PC-3 (cell line): ENCODE measurements at regions of chr20 and their contacts with region 1.

Region 1: DNA sequence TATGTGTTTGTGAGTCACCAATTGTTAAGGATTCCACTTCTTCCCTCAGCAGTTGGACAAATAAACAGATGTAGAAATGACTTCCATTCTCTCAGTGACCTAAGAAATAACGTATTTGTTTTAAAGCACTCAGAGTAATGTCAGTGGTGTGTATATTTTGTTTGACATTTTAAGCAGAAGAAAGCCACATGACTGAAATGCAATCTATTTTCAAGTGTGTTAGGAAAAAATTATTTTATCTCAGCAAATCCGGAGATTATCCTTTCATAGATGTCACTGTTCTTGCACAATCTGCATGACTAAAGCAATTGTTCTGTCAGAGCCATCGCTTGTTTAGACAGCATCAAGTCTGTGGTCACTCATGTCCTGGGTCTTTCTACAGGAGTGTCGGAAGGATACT is 77.1 kb downstream of the JAG1 start:
- DNase-seq: peak; percentile 87
- ATAC-seq: 0 out of 2 replicates have a peak, but pooled peaks have one; percentile 9
- H3K4me3 ChIP-seq: no peak overlapping the region
- H3K27ac ChIP-seq: peak overlapping the region; percentile 95
- H3K4me1 ChIP-seq: peaks cover 80% of the 10 kb centered on the region
- H3K27me3 ChIP-seq: no peaks in the 10 kb centered on the region
- CTCF ChIP-seq: no peak

Region 2: DNA sequence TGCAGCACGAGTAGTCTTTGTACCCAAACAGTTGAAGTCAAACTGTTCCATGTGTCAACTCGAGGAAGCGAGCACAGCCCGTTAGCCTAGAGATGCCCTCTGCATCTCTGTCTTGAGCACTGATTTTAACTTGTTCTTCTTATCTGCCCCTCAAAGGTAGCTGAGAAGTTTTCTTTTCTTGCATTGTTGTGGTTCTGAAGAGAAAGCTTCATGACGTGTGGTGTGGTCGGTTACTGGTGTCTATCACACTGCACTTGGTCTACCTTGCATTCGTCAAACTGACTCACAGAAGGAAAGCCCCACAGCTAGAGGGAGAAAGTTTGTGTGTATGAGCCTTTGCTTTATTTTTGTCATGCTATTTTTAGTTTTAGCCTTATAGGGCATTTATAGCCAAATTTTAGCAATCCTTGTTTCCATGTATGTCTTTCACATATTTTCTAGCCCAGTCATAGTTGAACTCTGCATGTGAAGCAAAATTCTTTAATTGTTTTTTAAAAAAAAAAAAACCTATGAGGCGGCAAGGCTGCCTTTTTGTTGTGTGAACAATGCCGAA is 38.0 kb before region 1 on chr20:
- CTCF ChIA-PET with region 1: no interaction called
- POLR2A ChIA-PET with region 1: no interaction called
- intact Hi-C with region 1: loop called (anchors 2 kb)
- DNase-seq: peak; percentile 92
- ATAC-seq: peak; percentile 75
- H3K4me3 ChIP-seq: peak overlapping the region; percentile 22; the same call in 1 of the 2 replicates
- H3K27ac ChIP-seq: peak overlapping the region; percentile 96
- H3K4me1 ChIP-seq: peaks cover 74% of the 10 kb centered on the region
- H3K27me3 ChIP-seq: no peaks in the 10 kb centered on the region
- CTCF ChIP-seq: no peak; the same call in 1 of the 2 replicates

Region 3: DNA sequence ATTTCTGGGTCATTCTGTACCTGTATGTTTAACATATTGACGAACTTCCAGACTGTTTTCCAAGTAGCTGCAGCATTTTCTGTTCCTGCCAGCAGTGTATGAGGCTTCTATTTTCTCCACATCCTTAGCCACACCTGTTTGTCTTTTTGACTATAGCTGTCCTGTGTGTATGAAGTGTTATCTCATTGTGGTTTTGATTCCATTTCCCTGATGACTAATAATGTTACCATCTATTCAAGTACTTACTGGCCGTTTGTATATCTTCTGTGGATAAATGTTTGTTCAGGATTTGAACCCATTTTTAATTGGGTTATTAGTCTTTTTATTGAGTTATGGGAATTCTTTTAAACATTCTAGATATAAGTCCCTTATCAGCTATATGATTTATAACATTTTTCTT is 18.1 kb before region 1 on chr20:
- CTCF ChIA-PET with region 1: interaction called, 3 read pairs
- POLR2A ChIA-PET with region 1: interaction called, 4 read pairs
- intact Hi-C with region 1: loop called (anchors 1 kb)
- DNase-seq: peak; percentile 96
- ATAC-seq: peak; percentile 78
- H3K4me3 ChIP-seq: peak overlapping the region; percentile 13; the same call in 1 of the 2 replicates
- H3K27ac ChIP-seq: peak overlapping the region; percentile 97
- H3K4me1 ChIP-seq: peaks cover 71% of the 10 kb centered on the region
- H3K27me3 ChIP-seq: no peaks in the 10 kb centered on the region
- CTCF ChIP-seq: no peak

Region 4: GRCh38 chr20:10636326-10636818 is 39.6 kb after region 1 on chr20:
- CTCF ChIA-PET with region 1: no interaction called
- POLR2A ChIA-PET with region 1: no interaction called
- intact Hi-C with region 1: loop called (anchors 5 kb)
- DNase-seq: peak; percentile 36
- ATAC-seq: peak; percentile 18
- H3K4me3 ChIP-seq: no peak overlapping the region
- H3K27ac ChIP-seq: peak overlapping the region; percentile 53
- H3K4me1 ChIP-seq: peaks cover 7% of the 10 kb centered on the region; the same call in 1 of the 2 replicates
- H3K27me3 ChIP-seq: no peaks in the 10 kb centered on the region
- CTCF ChIP-seq: peak; percentile 19; the same call in 1 of the 2 replicates

Region 5: DNA sequence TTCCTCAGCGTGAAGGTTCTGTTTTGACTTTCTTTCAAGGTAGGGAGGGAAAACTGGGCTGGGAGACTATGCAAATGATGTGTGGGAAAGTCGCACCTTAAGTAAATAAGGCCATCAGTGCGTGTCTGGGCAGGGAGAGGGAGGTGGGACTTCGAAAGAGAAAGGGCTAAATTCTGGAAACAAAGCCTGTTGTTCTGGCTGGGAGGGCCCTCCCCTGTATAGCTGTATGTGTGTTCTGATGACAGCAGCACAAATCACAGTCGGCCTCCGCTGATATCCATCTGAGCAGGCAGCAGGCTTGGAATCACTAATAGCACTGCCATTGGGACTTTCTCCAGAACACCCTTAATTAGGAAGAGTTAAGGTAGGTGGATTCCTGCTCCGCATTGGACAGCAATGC is 57.9 kb after region 1 on chr20:
- CTCF ChIA-PET with region 1: no interaction called
- POLR2A ChIA-PET with region 1: interaction called, 31 read pairs
- intact Hi-C with region 1: no loop called
- DNase-seq: no peak
- ATAC-seq: peak; percentile 23
- H3K4me3 ChIP-seq: no peak overlapping the region
- H3K27ac ChIP-seq: peak overlapping the region; percentile 66
- H3K4me1 ChIP-seq: peaks cover 17% of the 10 kb centered on the region
- H3K27me3 ChIP-seq: no peaks in the 10 kb centered on the region
- CTCF ChIP-seq: no peak

Region 6: DNA sequence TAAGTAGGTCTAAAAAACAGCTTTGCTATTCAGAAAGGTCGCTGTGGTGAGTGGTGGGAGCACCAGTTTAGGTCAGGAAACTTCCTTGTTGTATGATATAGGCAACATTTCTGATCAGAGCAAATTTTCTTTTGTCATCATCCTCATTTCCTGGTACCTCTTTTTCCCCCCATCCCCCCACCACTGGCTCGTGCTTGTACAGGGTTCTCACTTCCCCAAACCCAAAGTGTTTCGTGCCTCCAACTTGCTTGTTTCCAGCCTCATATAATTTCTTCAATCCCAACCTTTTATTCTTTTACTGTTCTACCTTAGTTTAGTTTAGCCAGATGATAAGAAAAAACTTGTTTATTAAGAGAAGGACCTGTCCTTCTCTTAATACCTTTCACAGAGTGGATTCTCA is 286.4 kb after region 1 on chr20:
- CTCF ChIA-PET with region 1: no interaction called
- POLR2A ChIA-PET with region 1: no interaction called
- intact Hi-C with region 1: no loop called
- DNase-seq: no peak
- ATAC-seq: no peak
- H3K4me3 ChIP-seq: no peak overlapping the region
- H3K27ac ChIP-seq: no peak overlapping the region
- H3K4me1 ChIP-seq: no peaks in the 10 kb centered on the region
- H3K27me3 ChIP-seq: no peaks in the 10 kb centered on the region
- CTCF ChIP-seq: no peak